Activated naive CD4-positive, alpha-beta T cell treated with anti-CD3 and anti-CD28 coated beads for 36 hours (primary cell): ENCODE measurements at regions of chr19 and their contacts with region 1.

Region 1: GRCh38 chr19:45886427-45887199 is 672 bp upstream of the IRF2BP1 start:
- DNase-seq: peak; percentile 98
- H3K4me3 Mint-ChIP-seq: peak overlapping the region; percentile 94
- H3K27ac Mint-ChIP-seq: peak overlapping the region; percentile 95
- H3K4me1 Mint-ChIP-seq: peaks cover 25% of the 10 kb centered on the region
- H3K27me3 Mint-ChIP-seq: no peaks in the 10 kb centered on the region

Region 2: GRCh38 chr19:45730389-45731288 is 156.0 kb before region 1 on chr19 and contains the start of gene FBXO46:
- CTCF ChIA-PET with region 1: no interaction called
- intact Hi-C with region 1: loop called (anchors 1 kb)
- DNase-seq: peak; percentile 99
- H3K4me3 Mint-ChIP-seq: peak within 1 kb of the TSS; percentile 95
- H3K27ac Mint-ChIP-seq: peak within 1 kb of the TSS; percentile 83
- H3K4me1 Mint-ChIP-seq: peaks cover 29% of the 10 kb centered on the region
- H3K27me3 Mint-ChIP-seq: no peaks in the 10 kb centered on the region
- total RNA-seq, gene FBXO46: 21.8 to 23.2 TPM

Region 3: DNA sequence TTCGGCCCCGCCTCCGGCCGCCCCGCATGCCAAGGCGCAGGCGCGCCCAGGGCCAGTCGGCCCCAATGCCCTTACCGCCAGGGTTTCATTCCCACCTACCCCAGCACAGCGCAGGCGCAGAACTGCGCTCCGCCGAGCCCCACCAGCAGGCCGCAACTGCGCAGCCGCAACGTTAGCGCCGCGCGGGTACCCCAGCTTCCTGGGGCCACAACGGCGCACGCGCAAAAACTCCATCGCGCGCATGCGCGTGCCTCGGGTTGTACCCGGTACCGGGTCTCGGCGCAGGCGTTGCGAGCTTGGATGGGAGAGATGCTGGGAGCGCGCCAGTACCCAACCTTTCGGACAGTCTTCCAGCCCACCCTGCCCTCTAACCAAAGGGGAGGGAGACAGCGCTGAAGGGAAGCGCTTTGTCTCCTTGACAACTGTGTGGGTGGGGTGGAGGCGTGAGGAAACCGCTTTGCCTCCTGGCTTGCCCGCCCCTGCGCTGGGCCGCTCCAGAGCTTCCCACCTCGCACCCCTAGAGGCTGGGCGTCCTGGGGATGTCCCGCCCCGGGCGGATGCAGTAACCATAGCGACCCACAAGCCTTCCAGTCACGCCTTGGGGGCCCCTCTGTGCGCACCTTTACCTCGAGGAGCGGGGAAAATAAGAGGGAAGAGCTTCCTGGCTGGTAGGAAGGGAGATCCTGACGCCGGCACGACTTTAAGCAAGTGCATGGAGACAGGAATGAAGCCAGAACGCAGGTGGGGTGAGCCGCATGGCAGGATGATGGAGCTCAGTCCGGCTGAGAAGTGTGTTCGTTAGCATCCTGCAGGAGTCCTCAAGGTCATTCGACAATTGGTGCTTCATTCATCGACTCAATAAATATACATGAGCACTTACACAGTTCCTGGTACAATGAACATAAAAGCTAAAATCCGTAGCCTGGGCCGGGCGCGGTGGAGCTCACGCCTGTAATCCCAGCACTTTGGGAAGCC is 16.3 kb after region 1 on chr19:
- CTCF ChIA-PET with region 1: interaction called, 9 read pairs
- intact Hi-C with region 1: loop called (anchors 1 kb)
- DNase-seq: peak; percentile 99
- H3K4me3 Mint-ChIP-seq: peak overlapping the region; percentile 88
- H3K27ac Mint-ChIP-seq: peak overlapping the region; percentile 71
- H3K4me1 Mint-ChIP-seq: peaks cover 12% of the 10 kb centered on the region
- H3K27me3 Mint-ChIP-seq: no peaks in the 10 kb centered on the region

Region 4: DNA sequence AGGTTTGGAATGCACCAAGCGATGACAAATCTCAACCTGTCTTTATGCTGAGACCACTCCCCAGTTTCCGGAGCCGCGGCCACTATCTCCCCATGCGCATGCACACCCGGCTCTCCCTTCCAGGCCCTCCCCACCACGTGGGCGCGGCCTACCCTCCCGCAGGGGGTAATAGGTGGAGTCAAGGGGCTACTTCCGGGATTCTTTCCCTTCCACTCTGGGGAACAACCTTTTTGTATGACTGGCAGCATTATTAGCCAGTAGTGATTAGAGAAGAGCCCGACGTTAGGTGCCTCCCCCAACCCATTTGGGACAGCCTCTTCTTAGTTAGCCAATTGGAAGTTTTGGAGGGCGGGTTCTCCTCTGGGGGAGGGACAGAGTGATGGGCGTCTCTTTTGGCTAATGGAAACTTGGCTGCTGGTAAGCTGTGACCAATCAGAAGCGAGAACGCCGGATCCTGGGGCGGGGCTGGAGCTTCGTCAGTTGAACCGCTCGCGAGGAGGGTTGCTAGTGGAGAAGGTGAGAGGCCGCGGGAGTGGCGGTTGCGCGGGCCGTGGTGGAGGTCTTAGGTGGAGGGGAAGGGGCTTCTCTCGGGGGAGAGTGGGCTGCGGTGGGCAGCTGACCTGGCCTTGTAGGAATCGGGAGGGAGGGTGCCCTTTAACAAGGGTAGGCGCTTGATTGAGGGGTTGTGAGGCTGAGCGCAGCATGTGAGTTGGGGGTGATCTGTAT is 108.5 kb after region 1 on chr19 and contains the start of gene CCDC61:
- CTCF ChIA-PET with region 1: no interaction called
- intact Hi-C with region 1: loop called (anchors 1 kb)
- DNase-seq: peak; percentile 98
- H3K4me3 Mint-ChIP-seq: peak within 1 kb of the TSS; percentile 40
- H3K27ac Mint-ChIP-seq: no peak within 1 kb of the TSS
- H3K4me1 Mint-ChIP-seq: peaks cover 23% of the 10 kb centered on the region
- H3K27me3 Mint-ChIP-seq: no peaks in the 10 kb centered on the region
- total RNA-seq, gene CCDC61: 26.4 to 29.3 TPM

Region 5: GRCh38 chr19:46346821-46347571 is 460.4 kb after region 1 on chr19 and contains the start of gene PPP5C:
- CTCF ChIA-PET with region 1: no interaction called
- intact Hi-C with region 1: loop called (anchors 10 kb)
- DNase-seq: peak; percentile 96
- H3K4me3 Mint-ChIP-seq: peak within 1 kb of the TSS; percentile 90
- H3K27ac Mint-ChIP-seq: peak within 1 kb of the TSS; percentile 88
- H3K4me1 Mint-ChIP-seq: peaks cover 42% of the 10 kb centered on the region
- H3K27me3 Mint-ChIP-seq: no peaks in the 10 kb centered on the region
- total RNA-seq, gene PPP5C: 87.4 to 89.2 TPM